ENCODE measurements at regions of chr1 and their contacts with region 1.

Region 1: GRCh38 chr1:201085916-201086735 is 26.1 kb downstream of the CACNA1S start:
- DNase-seq: peak; percentile 33
- ATAC-seq: peak; percentile 95
- H3K4me3 ChIP-seq: no peak overlapping the region
- H3K27ac ChIP-seq: no peak overlapping the region
- H3K4me1 ChIP-seq: no peaks in the 10 kb centered on the region
- H3K27me3 ChIP-seq: peaks cover 62% of the 10 kb centered on the region
- CTCF ChIP-seq: peak; percentile 66
- POLR2A ChIP-seq: no peak
- RAD21 ChIP-seq: peak; percentile 68

Region 2: DNA sequence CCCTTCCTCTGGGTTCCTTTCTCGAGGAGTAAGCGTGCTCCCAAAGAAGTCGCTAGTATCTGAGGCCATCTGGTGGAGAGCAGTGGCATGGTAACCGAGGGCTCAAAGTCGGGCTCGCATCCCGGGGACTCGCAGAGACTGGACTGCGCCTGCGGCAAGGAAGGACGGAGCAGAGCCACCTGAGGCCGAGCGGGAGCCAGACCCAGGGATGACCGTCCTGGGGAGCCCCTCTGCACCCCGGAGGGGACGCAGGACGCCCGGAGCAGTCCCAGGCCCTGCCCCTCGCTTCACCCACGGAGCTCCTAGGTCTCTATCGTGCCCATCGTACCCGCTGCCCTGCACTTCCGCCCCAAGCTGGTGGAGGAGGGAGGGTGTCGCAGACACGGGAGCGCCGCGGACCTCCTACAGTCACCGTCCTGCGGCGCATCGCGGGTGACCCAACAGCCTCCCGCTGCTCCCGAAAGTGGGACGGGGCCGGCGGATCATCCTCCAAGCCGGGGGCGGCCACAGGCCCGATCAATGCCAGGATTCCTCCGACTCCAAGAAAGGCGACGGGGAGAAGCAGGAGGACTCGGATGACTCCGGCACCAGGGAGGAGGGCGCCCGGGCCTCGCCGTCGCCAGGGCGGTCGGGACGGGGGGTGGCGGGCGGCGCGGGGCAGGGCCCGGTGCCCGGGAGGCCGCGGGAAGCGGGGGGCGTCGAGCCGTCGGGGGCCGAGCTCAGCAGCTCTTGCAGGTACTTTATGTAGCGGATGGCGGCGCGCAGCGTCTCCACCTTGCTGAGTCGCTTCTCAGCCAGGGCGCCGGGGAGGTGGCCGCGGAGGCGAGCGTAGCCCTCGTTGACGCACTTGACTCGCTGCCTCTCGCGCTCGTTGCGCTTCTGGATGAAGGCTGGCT is 28.4 kb after region 1 on chr1:
- CTCF ChIA-PET with region 1: interaction called, 7 read pairs
- POLR2A ChIA-PET with region 1: no interaction called
- dilution Hi-C with region 1: no loop called
- in situ Hi-C with region 1: no loop called
- intact Hi-C with region 1: loop called (anchors 1 kb)
- DNase-seq: peak; percentile 89
- ATAC-seq: peak; percentile 99
- H3K4me3 ChIP-seq: peak overlapping the region; percentile 67
- H3K27ac ChIP-seq: no peak overlapping the region; the same call in 1 of the 2 replicates
- H3K4me1 ChIP-seq: peaks cover 2% of the 10 kb centered on the region; the same call in 1 of the 2 replicates
- H3K27me3 ChIP-seq: peaks cover 54% of the 10 kb centered on the region
- CTCF ChIP-seq: peak; percentile 88
- POLR2A ChIP-seq: no peak
- RAD21 ChIP-seq: peak; percentile 87

Region 3: DNA sequence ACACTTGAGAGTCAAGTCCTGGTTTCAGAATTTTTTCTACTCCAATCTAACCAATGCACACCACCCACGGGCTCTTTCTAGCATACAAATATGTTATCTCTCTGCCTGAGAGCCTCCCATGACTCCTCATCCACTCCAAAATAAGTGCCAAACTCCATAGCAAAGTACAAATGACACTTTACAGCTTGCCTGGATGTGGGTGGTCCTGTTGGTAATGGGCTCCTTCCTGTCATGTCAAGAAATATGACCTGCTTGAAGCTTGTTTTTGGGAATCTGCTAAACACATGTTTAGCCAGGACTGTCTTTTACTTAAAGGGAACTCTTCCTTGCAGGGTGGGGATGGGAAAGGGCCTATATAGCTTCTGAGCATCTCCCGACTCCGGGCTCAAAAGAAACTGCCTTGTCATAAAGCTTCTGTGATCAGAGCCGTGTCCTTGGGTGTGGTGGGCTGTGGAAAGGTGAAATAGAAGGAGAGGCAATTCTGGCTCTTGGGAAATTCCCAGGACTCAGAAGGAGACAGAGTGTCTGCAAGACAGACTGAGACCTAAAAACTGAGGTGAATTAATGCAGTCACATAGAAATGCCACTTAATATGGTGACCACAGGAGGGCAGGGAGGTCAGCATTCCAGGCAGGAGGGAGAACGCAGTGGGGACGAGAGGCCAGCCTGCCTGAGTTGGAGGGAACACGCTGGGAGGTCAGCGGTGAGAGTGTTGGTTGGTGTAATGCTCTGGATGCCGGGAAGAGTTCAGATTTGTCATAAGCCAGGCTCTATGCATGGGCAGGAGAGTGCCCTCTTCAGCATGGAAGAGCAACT is 98.4 kb after region 1 on chr1:
- CTCF ChIA-PET with region 1: no interaction called
- POLR2A ChIA-PET with region 1: no interaction called
- dilution Hi-C with region 1: no loop called
- in situ Hi-C with region 1: no loop called
- intact Hi-C with region 1: loop called (anchors 10 kb)
- DNase-seq: peak; percentile 88
- ATAC-seq: peak; percentile 100
- H3K4me3 ChIP-seq: no peak overlapping the region
- H3K27ac ChIP-seq: no peak overlapping the region
- H3K4me1 ChIP-seq: peaks cover 5% of the 10 kb centered on the region
- H3K27me3 ChIP-seq: peaks cover 8% of the 10 kb centered on the region; the same call in 1 of the 2 replicates
- CTCF ChIP-seq: peak; percentile 81
- POLR2A ChIP-seq: no peak
- RAD21 ChIP-seq: peak; percentile 69

Region 4: GRCh38 chr1:201229771-201230635 is 143.9 kb after region 1 on chr1:
- CTCF ChIA-PET with region 1: no interaction called
- POLR2A ChIA-PET with region 1: no interaction called
- dilution Hi-C with region 1: no loop called
- in situ Hi-C with region 1: loop called (anchors 10 kb)
- intact Hi-C with region 1: no loop called
- DNase-seq: peak; percentile 71
- ATAC-seq: peak; percentile 76
- H3K4me3 ChIP-seq: no peak overlapping the region
- H3K27ac ChIP-seq: no peak overlapping the region
- H3K4me1 ChIP-seq: no peaks in the 10 kb centered on the region
- H3K27me3 ChIP-seq: peaks cover 20% of the 10 kb centered on the region
- CTCF ChIP-seq: peak; percentile 25; the same call in 1 of the 2 replicates
- POLR2A ChIP-seq: no peak
- RAD21 ChIP-seq: peak; percentile 39

Region 5: DNA sequence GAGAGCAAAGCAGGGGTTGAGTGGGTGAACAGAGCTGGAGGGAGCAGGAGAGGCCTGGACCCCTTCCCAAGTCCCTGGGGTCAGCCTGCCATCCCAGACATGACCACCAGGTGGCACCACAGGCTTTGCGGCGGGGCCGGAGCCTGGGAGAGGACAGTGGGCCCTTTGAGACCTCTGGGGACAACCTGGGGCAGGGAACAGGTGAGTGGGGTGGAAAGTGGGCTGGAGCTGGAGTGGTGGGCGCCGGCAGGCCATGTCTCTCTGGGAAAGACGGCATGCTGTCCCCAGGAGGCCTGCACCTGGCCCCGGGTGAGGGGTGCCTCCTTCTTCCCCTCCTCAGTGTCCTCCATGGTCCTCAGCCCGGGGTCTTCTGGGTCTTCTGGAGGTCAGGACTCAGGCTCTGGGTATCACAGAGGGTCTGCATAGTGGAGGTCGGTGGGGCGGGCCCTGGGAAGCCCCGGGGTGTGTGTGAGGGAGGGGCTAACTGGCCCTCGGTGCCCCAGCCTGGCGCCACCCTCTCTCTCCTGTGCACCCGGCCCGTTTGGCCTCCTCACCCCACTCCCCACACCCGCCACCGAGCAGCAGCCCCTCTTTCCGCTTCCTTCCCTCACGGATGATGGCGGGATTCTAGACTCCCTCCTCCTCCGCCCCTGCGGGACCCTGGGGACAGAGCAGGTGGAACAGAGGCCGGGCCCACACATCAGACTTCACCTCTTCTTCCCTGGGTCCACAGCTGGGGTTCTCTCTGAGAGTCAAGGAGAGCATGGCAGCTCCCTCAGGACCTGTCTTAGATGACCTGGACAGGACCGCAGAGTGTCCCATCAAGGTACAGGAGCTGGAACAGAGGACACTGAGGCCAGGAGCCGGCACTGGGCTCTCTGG is 168.7 kb after region 1 on chr1:
- CTCF ChIA-PET with region 1: no interaction called
- POLR2A ChIA-PET with region 1: no interaction called
- dilution Hi-C with region 1: no loop called
- in situ Hi-C with region 1: no loop called
- intact Hi-C with region 1: no loop called
- DNase-seq: no peak
- ATAC-seq: peak; percentile 89
- H3K4me3 ChIP-seq: no peak overlapping the region
- H3K27ac ChIP-seq: no peak overlapping the region
- H3K4me1 ChIP-seq: peaks cover 4% of the 10 kb centered on the region
- H3K27me3 ChIP-seq: peaks cover 27% of the 10 kb centered on the region
- CTCF ChIP-seq: peak; percentile 94
- POLR2A ChIP-seq: peak; percentile 66
- RAD21 ChIP-seq: peak; percentile 99